KBM-7 (cell line): ENCODE measurements at regions of chr9 and their contacts with region 1.

Region 1: DNA sequence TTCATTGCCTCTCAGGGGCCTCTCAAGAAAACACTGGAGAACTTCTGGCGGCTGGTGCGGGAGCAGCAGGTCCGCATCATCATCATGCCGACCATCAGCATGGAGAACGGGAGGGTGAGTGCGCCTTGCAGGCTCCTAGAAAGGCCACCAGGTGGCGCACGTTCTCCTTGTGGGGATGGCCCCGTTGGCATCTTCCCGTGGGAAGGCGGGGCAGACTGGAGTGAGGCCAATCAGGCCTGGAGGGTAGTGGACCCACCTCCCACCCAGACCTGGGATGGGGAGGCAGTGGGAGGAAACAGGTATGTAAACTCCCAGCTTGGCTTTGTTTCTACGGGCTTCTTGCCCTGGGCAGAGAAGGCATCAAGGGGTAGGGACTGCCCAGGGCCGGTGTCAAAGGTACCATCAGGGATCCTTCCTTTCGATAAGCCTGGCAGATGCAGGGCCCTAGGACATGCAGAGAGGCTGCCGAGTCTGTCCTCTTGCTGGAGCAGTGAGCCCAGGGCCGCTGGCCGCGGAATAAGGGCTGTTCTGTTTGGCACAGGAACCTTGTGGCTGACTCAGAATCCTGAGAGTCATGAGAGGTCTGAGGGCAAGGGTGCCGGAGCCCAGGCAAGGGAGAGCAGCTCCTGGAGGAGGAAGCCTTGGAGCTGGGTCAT is 18.9 kb upstream of the SPTLC1 start:
- DNase-seq: peak; percentile 89

Region 2: GRCh38 chr9:92242260-92243136 is 108.4 kb after region 1 on chr9:
- in situ Hi-C with region 1: loop called (anchors 25 kb)
- DNase-seq: no peak

Region 3: GRCh38 chr9:92455217-92455616 is 321.1 kb after region 1 on chr9:
- in situ Hi-C with region 1: loop called (anchors 25 kb)
- DNase-seq: peak; percentile 16

Region 4: DNA sequence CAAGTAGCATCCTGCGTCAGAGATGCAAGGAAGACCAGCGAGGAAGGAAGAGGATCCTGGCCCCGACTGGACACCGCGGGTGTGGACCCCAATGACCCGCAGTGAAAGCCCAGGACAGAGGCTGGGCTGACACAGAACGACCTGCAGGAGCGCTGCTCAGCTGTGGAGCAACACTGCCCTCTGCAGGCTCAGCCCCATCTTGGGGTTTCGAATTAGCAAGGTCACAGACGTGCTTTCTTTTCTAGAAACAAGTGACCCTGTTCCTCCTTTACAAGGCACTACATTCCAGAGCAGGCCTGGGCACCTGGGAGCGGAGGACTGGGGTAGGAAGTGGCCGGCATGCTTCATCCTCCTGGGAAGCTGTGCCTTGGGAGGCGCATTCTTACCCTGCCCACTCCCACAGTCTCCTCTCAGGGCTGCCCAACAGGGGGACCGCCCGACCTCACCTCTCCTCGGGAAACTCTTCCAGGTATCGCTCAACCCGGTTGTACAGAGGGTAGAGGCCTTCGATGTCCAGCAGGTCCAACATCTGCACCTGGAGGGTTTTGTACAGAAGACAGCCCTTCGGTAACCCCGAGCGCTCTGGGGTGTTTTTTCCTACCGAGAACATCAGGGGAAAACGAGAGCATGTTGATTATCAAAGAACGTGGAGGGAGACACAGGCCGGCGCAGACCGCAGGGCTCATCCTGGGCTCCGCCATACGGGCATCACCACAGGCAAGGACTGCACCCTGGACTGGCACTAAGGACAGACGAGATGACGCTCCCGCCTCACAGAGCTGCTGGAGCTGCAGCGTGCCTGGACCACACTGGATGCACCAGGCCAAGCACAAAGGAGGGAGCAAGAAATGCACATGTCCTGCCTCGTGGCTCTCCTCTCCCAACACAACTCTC is 500.9 kb after region 1 on chr9:
- in situ Hi-C with region 1: loop called (anchors 25 kb)
- DNase-seq: peak; percentile 73